ENCODE measurements at regions of chr7 and their contacts with region 1.

Region 1: GRCh38 chr7:41916450-41916959 is 213.6 kb upstream of the INHBA start:
- DNase-seq: peak; percentile 99
- ATAC-seq: peak; percentile 75
- H3K4me3 ChIP-seq: no peak overlapping the region
- H3K27ac ChIP-seq: peak overlapping the region; percentile 85
- H3K4me1 ChIP-seq: peaks cover 26% of the 10 kb centered on the region
- H3K27me3 ChIP-seq: no peaks in the 10 kb centered on the region
- CTCF ChIP-seq: no peak
- POLR2A ChIP-seq: peak; percentile 42; the same call in 1 of the 2 replicates
- RAD21 ChIP-seq: no peak; the same call in 1 of the 2 replicates

Region 2: GRCh38 chr7:41886901-41887311 is 29.6 kb before region 1 on chr7:
- CTCF ChIA-PET with region 1: interaction called, 5 read pairs
- POLR2A ChIA-PET with region 1: interaction called, 3 read pairs
- dilution Hi-C with region 1: no loop called
- in situ Hi-C with region 1: no loop called
- intact Hi-C with region 1: loop called (anchors 1 kb)
- DNase-seq: peak; percentile 98
- ATAC-seq: peak; percentile 86
- H3K4me3 ChIP-seq: no peak overlapping the region
- H3K27ac ChIP-seq: peak overlapping the region; percentile 95
- H3K4me1 ChIP-seq: peaks cover 45% of the 10 kb centered on the region
- H3K27me3 ChIP-seq: no peaks in the 10 kb centered on the region
- CTCF ChIP-seq: peak; percentile 56
- POLR2A ChIP-seq: no peak
- RAD21 ChIP-seq: peak; percentile 72

Measured in IMR-90 (cell line).